ENCODE measurements at regions of chr2 and their contacts with region 1.

Region 1: GRCh38 chr2:218186355-218186766 is 19.6 kb upstream of the CXCR1 start:
- DNase-seq: peak in 2 of 3 donors; percentile 55 to 62
- ATAC-seq: peak; percentile 95 to 99 (median 97)
- H3K4me3 ChIP-seq: no peak overlapping the region
- H3K27ac ChIP-seq: no peak overlapping the region
- H3K4me1 ChIP-seq: no peaks in the 10 kb centered on the region
- H3K27me3 ChIP-seq: no peaks in the 10 kb centered on the region
- CTCF ChIP-seq: peak; percentile 78 to 86 (median 80)
- POLR2A ChIP-seq: no peak

Region 2: GRCh38 chr2:218387374-218388194 is 201.2 kb after region 1 on chr2:
- intact Hi-C with region 1: loop called in 1 of 2 experiments (anchors 10 kb)
- DNase-seq: peak in 2 of 3 donors; percentile 58 to 60
- ATAC-seq: peak; percentile 73 to 89 (median 82)
- H3K4me3 ChIP-seq: peak overlapping the region; percentile 16 to 51 (median 25)
- H3K27ac ChIP-seq: peak overlapping the region in 1 of 3 donors; percentile 13
- H3K4me1 ChIP-seq: no peaks in the 10 kb centered on the region
- H3K27me3 ChIP-seq: no peaks in the 10 kb centered on the region
- CTCF ChIP-seq: no peak
- POLR2A ChIP-seq: no peak

Region 3: DNA sequence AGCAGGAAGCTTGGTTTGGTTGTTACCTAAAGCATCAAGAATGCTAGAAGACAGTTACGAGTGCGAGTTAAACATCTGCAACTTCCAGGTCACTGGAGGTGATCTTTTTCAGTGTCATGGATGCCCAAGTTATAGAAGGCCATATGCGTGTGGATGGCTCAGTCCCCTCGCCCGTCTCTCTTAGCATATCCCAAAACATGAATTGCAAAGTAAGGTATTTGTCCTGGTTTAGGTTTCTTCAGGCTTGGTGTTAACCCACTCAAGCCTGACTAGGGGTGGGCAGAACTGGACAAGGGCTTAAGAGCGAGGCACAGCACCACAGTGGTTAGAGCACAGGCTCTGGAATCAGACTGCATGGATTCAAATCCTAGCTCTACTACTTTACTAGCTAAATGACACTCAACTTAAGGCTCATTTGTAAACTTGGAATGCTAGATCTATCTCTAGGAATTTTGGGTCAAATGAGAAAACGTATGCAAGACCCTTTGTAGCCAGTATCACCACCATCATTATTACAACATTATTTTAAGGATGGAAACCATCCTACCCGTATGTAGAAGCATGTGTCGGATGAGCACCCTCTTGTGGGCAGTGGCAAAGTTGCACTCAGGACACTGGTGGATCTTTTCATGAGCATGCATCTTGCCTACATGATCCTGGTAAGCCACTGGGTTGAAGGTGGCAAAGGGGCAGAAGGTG is 461.9 kb after region 1 on chr2:
- intact Hi-C with region 1: no loop called
- DNase-seq: peak; percentile 48 to 64 (median 59)
- ATAC-seq: peak; percentile 82 to 85 (median 83)
- H3K4me3 ChIP-seq: no peak overlapping the region
- H3K27ac ChIP-seq: no peak overlapping the region
- H3K4me1 ChIP-seq: peaks cover 0 to 19% (median 0%) of the 10 kb centered on the region in 4 donors
- H3K27me3 ChIP-seq: no peaks in the 10 kb centered on the region
- CTCF ChIP-seq: peak; percentile 75 to 89 (median 83)
- POLR2A ChIP-seq: no peak

Measured in right lobe of liver (tissue), 6 donors.